Cardiac septum (tissue), 1 donor: ENCODE measurements at regions of chr11 and their contacts with region 1.

Region 1: GRCh38 chr11:11538277-11538960 is 83.4 kb downstream of the GALNT18 start:
- DNase-seq: peak; percentile 89

Region 2: GRCh38 chr11:11148104-11148509 is 390.3 kb before region 1 on chr11:
- intact Hi-C with region 1: loop called (anchors 10 kb)
- DNase-seq: peak; percentile 83

Region 3: GRCh38 chr11:11407065-11407762 is 131.2 kb before region 1 on chr11:
- intact Hi-C with region 1: loop called (anchors 5 kb)
- DNase-seq: no peak

Region 4: GRCh38 chr11:11476971-11477645 is 61.3 kb before region 1 on chr11:
- intact Hi-C with region 1: no loop called
- DNase-seq: peak; percentile 62

Region 5: DNA sequence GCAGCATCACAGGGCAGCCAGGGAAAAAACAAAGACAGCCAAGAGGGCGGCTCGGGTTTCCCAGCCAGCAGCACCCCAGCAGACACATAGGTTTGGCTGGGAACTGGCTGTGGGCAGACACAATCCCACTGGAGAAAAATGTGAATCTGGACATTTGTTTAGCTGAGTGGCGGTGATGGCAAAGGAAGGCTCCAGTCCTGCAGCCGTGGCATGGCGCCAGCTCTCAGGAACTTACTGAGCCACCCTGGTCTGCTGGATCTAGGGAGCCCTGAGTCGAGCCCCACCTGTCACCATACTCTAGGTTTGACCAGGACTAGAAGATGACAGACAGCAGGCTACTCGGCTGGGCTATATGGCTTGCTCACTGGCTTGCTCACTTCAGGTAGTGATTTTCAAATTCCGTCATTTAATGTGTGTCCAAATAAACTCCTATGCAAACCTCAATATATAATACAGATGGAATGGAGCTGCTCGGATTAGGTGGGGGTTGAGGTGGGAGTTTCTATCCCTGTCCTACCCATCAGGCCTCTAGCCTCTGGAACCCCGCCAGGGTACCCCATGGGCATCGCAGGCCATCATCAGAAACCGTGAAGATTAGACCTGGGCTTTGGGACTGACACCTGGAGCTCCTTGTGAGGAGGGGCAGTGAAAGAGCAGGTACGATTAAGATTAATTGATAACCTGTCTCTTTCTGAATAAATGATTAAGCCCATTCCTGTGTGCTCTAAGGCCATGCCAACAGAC is 40.8 kb after region 1 on chr11:
- intact Hi-C with region 1: loop called (anchors 2 kb)
- DNase-seq: no peak

Region 6: DNA sequence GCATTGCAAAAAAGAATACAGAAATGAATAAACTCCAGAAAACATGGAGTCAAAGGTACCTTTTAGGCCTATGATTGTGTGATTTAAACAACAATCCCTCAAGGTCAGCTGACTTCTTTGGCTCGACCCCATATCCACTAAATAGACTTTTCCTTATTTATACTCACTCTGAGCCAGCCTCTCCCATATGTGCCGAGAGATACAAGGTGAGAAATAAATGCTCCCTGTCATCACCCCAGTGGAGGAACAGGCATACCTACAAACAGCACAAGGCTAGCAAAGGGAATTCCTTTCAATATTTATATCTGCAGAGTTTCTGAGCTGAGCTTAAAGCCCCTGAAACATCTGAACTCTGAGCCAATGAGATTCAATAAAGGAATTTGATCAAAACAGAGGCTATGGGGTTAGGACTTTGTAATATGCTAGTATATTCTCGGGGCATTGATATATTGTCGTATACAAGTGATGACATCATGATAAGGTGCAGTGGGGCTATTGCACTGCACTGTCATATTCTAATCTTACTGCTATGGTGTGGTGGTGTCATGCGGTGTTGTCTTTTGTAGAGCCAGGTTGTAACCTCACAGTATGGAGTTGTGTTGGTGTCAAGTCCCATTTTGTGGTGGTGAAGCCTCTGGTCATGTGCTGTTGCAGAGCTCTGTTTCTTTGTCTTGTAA is 139.4 kb after region 1 on chr11:
- intact Hi-C with region 1: no loop called
- DNase-seq: no peak

Region 7: DNA sequence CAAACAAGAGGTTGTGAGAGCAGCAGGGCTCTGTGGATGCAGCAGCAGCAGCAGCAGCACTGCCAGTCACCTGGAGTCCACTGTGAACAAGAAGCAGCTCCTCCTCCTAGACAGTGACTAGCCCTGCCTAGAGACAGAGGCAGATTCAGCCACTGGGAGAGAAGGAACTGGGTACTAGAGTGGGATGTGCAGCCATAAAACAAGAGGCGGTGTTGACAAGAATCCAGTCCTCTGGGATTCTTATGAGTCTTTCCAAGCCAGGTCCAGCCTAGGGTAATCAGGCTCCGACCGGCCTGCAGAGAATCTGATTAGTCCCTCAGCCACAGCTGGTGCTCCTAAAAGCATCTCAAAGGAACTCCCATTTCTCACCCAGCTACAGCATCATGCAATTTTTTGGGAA is 219.5 kb after region 1 on chr11:
- intact Hi-C with region 1: no loop called
- DNase-seq: no peak